Endothelial cell of umbilical vein (primary cell): ENCODE measurements at regions of chr1 and their contacts with region 1.

Region 1: GRCh38 chr1:156689035-156689952 is 12.1 kb upstream of the NES start:
- DNase-seq: peak; percentile 86
- H3K4me3 ChIP-seq: no peak overlapping the region
- H3K27ac ChIP-seq: no peak overlapping the region
- H3K4me1 ChIP-seq: no peaks in the 10 kb centered on the region
- H3K27me3 ChIP-seq: peaks cover 19 to 31% of the 10 kb centered on the region in 2 experiments
- CTCF ChIP-seq: peak; percentile 87 to 93
- POLR2A ChIP-seq: no peak

Region 2: GRCh38 chr1:156659994-156660751 is 29.1 kb before region 1 on chr1:
- CTCF ChIA-PET with region 1: interaction called, 54 read pairs
- POLR2A ChIA-PET with region 1: no interaction called
- dilution Hi-C with region 1: no loop called
- intact Hi-C with region 1: no loop called
- DNase-seq: peak; percentile 96
- H3K4me3 ChIP-seq: peak overlapping the region in 1 of 3 experiments; percentile 59
- H3K27ac ChIP-seq: peak overlapping the region; percentile 85
- H3K4me1 ChIP-seq: peaks cover 67% of the 10 kb centered on the region
- H3K27me3 ChIP-seq: peaks cover 3 to 9% of the 10 kb centered on the region in 2 experiments
- CTCF ChIP-seq: peak; percentile 100
- POLR2A ChIP-seq: peak; percentile 83

Region 3: DNA sequence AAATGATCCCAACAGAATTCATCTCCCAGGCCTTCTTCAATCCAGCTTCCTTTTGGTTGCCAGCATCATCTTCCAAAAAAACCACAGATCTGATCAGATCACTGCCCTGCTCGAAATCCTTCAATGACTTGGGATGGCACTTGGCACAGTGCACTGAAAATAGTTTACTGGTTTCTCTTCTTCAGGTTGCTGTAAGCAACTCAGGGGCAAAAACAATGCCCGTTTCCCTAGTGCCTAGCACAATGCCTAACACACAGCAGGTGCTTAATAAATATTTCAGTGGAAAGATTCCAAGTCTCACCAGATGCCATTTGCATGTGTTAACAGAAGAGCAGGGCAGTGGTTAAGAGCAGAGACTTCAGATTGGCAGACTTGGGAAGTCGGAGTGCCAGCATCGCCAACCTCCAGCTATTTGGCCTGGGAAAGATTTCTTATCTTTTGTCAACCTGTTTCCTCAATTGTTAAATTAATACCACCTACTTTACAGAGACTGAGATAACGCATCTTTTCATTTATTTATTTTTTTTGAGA is 28.0 kb after region 1 on chr1:
- CTCF ChIA-PET with region 1: interaction called, 453 read pairs
- POLR2A ChIA-PET with region 1: no interaction called
- dilution Hi-C with region 1: no loop called
- intact Hi-C with region 1: no loop called
- DNase-seq: peak; percentile 21
- H3K4me3 ChIP-seq: no peak overlapping the region
- H3K27ac ChIP-seq: no peak overlapping the region
- H3K4me1 ChIP-seq: no peaks in the 10 kb centered on the region
- H3K27me3 ChIP-seq: no peaks in the 10 kb centered on the region
- CTCF ChIP-seq: no peak
- POLR2A ChIP-seq: no peak

Region 4: DNA sequence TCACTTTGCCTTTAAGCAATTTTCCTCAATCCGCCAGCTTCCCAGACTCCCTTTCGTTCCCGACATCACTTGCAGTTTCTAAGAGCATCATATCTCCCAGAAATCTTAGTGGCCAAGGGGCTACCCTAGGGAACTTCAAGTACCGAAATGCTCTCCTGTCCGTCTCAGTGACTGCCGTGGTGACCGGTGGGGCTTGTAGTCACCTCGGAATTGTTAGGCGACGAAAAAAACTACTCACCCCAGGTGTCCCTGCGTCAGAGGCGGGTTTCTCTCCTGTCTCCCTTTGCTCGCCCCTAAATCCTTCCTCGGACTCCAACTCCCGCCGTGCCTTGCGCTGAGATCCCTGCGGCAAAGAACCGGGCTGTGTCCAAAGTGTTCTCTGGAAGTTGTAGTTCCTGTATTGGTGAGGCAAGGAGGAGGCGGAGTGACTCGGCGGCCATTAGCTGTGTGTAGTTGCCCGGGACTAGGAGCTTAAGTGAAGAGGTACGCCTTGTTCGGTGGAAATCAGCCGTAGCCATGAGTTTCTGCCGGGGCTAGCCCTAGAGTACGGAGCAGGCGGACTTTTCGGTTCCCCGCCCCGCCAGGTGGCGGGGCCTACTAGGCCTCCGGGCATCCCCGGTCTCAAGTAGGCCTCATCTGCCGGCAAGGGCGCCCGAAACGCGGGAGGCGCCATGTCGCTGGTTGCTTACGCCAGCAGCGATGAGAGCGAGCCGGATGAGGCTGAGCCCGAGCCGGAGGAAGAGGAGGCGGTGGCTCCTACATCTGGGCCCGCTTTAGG is 78.0 kb after region 1 on chr1 and contains the start of gene PRCC:
- CTCF ChIA-PET with region 1: interaction called, 12 read pairs
- POLR2A ChIA-PET with region 1: no interaction called
- dilution Hi-C with region 1: no loop called
- intact Hi-C with region 1: loop called (anchors 1 kb)
- DNase-seq: peak; percentile 100
- H3K4me3 ChIP-seq: peak within 1 kb of the TSS; percentile 65 to 91 (median 74)
- H3K27ac ChIP-seq: peak within 1 kb of the TSS; percentile 80
- H3K4me1 ChIP-seq: peaks cover 18% of the 10 kb centered on the region
- H3K27me3 ChIP-seq: no peaks in the 10 kb centered on the region
- CTCF ChIP-seq: no peak
- POLR2A ChIP-seq: no peak
- total RNA-seq, gene PRCC: 65.1 and 71.5 TPM in 2 replicates

Region 5: DNA sequence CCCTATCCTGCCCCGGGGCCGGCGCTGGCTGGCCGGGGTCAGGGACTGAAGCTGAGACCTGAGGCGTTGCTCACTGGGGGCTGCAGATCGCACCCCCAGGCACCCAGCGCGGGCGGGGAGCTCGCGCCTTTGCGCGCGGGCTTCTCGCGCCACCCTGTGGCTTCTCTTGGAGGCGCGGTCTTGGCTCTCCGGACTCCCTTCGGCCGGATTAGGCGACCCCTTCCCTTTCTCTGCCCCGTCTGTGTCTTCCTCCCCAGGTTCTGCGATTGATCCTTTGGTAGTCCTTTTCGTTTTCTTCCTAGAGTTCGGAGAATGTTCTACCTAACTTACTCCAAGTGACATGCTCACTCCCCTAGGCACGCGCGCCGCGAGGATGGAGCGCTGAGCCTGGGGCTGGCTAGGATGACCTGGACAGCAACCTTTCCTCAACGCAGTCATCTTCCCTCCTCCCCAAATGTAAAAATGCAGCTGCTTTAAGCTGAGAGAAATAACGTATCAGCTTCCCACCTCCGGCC is 170.9 kb after region 1 on chr1:
- CTCF ChIA-PET with region 1: interaction called, 184 read pairs
- POLR2A ChIA-PET with region 1: no interaction called
- dilution Hi-C with region 1: no loop called
- intact Hi-C with region 1: loop called (anchors 1 kb)
- DNase-seq: peak; percentile 40
- H3K4me3 ChIP-seq: peak overlapping the region in 2 of 3 experiments; percentile 1 to 30
- H3K27ac ChIP-seq: no peak overlapping the region
- H3K4me1 ChIP-seq: peaks cover 17% of the 10 kb centered on the region
- H3K27me3 ChIP-seq: peaks cover 39 to 40% of the 10 kb centered on the region in 2 experiments
- CTCF ChIP-seq: peak; percentile 79 to 90
- POLR2A ChIP-seq: no peak

Region 6: DNA sequence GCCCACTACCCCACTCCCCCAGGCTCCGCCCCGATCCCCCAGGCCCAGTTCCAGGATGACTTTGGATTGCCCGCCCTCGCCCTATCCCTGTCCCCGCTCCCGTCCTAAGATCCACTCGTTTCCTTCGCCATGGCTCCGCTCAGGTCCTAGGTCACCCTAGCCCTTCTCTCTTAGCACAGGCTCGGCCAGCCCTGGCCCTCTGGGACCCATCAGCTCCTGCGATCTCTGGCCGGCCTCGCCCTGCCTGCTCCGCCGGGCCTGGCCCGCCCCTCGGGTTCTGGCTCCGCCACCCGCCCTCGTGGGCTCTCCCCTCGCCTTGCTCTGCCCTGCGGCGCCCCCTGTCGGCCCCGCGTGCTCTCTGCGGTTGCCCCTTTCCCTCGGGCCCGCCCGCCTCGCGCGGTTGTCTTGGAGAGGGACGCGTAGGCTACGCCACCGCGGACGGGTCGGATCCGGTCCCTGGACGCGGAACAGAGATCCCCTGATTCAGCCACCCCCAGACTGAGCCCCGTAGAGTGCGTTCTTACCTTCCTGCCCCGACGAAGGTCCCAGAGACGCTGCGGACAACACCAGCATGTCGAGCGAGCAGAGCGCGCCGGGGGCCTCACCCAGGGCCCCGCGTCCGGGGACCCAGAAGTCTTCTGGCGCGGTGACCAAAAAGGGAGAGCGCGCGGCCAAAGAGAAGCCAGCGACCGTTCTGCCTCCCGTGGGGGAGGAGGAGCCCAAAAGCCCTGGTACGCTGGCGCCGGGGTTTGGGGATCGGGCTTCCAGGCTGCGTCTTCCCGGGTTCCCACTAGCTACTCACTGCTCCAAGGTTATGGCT is 231.1 kb after region 1 on chr1 and contains the start of gene LRRC71:
- CTCF ChIA-PET with region 1: interaction called, 19 read pairs
- POLR2A ChIA-PET with region 1: no interaction called
- dilution Hi-C with region 1: no loop called
- intact Hi-C with region 1: no loop called
- DNase-seq: peak; percentile 77
- H3K4me3 ChIP-seq: no peak within 1 kb of the TSS
- H3K27ac ChIP-seq: no peak within 1 kb of the TSS
- H3K4me1 ChIP-seq: no peaks in the 10 kb centered on the region
- H3K27me3 ChIP-seq: peaks cover 26 to 32% of the 10 kb centered on the region in 2 experiments
- CTCF ChIP-seq: peak; percentile 97 to 98
- POLR2A ChIP-seq: peak; percentile 71
- total RNA-seq, gene LRRC71: 0.66 and 1.2 TPM in 2 replicates